Psoas muscle (tissue), 8 donors: ENCODE measurements at regions of chr15 and their contacts with region 1.

Region 1: GRCh38 chr15:65818927-65819562 is 27.0 kb upstream of the DENND4A start:
- DNase-seq: no peak
- ATAC-seq: no peak
- H3K4me3 ChIP-seq: no peak overlapping the region
- H3K27ac ChIP-seq: no peak overlapping the region
- H3K4me1 ChIP-seq: no peaks in the 10 kb centered on the region
- H3K27me3 ChIP-seq: no peaks in the 10 kb centered on the region
- CTCF ChIP-seq: no peak

Region 2: DNA sequence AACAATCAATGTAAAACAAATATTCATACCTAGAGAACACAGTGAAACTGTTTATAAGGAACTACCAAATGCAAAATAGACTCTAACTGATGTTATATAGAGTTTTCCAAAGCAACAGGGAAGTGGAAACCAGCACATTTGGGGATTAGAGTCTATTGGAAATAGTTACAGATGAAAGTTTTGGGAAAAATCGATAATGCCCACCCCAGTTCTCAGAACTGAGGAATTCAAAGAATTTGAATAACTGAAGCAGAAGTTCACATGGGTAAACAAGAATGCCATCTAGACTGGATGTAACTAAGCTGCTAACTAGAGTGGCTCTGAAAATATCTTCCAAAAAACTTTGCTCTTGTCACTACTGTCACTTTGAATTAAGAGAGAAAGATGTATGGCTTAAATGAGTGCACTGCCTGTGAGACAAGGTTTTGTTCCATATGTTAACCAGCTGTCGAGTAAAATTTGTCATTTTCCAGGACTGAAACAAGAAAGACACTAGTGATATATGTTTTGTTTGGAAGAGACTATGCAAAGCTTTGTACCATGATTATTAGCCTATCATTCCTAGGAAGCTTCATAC is 17.7 kb before region 1 on chr15:
- intact Hi-C with region 1: loop called in 1 of 2 experiments (anchors 1 kb)
- DNase-seq: no peak
- ATAC-seq: no peak
- H3K4me3 ChIP-seq: no peak overlapping the region
- H3K27ac ChIP-seq: no peak overlapping the region
- H3K4me1 ChIP-seq: peaks cover 8% of the 10 kb centered on the region
- H3K27me3 ChIP-seq: no peaks in the 10 kb centered on the region
- CTCF ChIP-seq: no peak

Region 3: GRCh38 chr15:65881766-65882434 is 62.9 kb after region 1 on chr15:
- intact Hi-C with region 1: no loop called
- DNase-seq: no peak
- ATAC-seq: no peak
- H3K4me3 ChIP-seq: no peak overlapping the region
- H3K27ac ChIP-seq: no peak overlapping the region
- H3K4me1 ChIP-seq: no peaks in the 10 kb centered on the region
- H3K27me3 ChIP-seq: no peaks in the 10 kb centered on the region
- CTCF ChIP-seq: no peak

Region 4: GRCh38 chr15:66014635-66015182 is 195.7 kb after region 1 on chr15:
- intact Hi-C with region 1: no loop called
- DNase-seq: no peak
- ATAC-seq: peak in 1 of 4 donors; percentile 28
- H3K4me3 ChIP-seq: no peak overlapping the region
- H3K27ac ChIP-seq: no peak overlapping the region
- H3K4me1 ChIP-seq: no peaks in the 10 kb centered on the region
- H3K27me3 ChIP-seq: no peaks in the 10 kb centered on the region
- CTCF ChIP-seq: no peak